Adrenal gland (tissue), 19 donors: ENCODE measurements at regions of chr9 and their contacts with region 1.

Region 1: GRCh38 chr9:36597412-36598178 is 24.9 kb downstream of the MELK start:
- DNase-seq: peak in 5 of 7 donors; percentile 13 to 42 (median 27)
- H3K4me3 ChIP-seq: no peak overlapping the region
- H3K27ac ChIP-seq: no peak overlapping the region
- H3K4me1 ChIP-seq: no peaks in the 10 kb centered on the region
- H3K27me3 ChIP-seq: no peaks in the 10 kb centered on the region
- CTCF ChIP-seq: peak; percentile 64 to 93 (median 78)
- POLR2A ChIP-seq: no peak

Region 2: DNA sequence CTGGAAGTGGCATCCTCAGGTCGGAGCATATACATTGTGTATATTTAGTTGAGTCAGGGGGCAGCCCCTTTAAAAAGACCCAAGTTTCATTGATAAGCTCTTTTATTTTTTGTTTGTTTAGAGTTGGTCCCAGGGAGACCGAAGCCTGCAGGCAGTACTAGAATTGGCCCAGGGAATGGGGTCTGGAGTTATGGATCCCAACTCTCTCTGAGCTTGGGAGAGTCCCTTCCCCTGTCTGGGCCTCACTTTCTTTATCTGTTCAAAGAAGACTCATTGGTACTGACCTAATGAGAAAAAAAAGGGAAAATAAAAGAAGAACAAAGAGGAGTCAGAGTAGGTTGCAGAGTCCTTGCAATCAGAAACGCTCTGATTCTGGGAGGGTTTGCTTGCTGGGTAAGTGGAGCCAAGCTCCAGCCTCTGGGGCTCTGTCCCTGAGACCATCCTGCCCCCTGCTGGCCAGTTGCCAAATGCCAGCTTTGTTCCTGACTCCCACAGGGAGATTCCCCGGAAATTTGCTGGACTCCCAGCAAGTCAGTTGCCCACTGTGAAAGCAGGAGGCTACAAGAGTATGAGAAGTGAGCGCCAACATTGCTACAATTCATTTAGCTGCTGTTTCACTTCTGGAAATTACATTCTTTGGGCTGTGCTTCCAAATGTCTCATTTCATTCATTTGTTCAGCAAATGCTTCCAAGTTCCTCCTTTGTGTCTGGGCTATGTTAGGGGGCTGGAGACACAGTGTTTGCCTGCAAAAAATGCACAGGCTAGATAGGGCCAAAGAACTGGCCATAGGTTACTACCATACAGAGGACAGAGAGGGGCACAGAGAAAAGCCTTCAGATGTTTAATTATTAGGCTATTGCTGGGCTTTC is 131.3 kb after region 1 on chr9:
- intact Hi-C with region 1: loop called in 1 of 2 experiments (anchors 5 kb)
- DNase-seq: peak; percentile 38 to 78 (median 71)
- H3K4me3 ChIP-seq: no peak overlapping the region
- H3K27ac ChIP-seq: no peak overlapping the region
- H3K4me1 ChIP-seq: no peaks in the 10 kb centered on the region
- H3K27me3 ChIP-seq: no peaks in the 10 kb centered on the region
- CTCF ChIP-seq: peak; percentile 18 to 53 (median 44)
- POLR2A ChIP-seq: no peak

Region 3: GRCh38 chr9:36847781-36848673 is 250.4 kb after region 1 on chr9:
- intact Hi-C with region 1: no loop called
- DNase-seq: no peak
- H3K4me3 ChIP-seq: no peak overlapping the region
- H3K27ac ChIP-seq: no peak overlapping the region
- H3K4me1 ChIP-seq: no peaks in the 10 kb centered on the region
- H3K27me3 ChIP-seq: no peaks in the 10 kb centered on the region
- CTCF ChIP-seq: no peak
- POLR2A ChIP-seq: no peak